Activated CD8-positive, alpha-beta memory T cell treated with anti-CD3 and anti-CD28 coated beads, Interleukin-2, amount 10 ng/mL, durations not matched to agents 7 days and 5 days (primary cell): ENCODE measurements at regions of chr6 and their contacts with region 1.

Region 1: GRCh38 chr6:13434777-13435176 is 52.6 kb downstream of the GFOD1 start:
- DNase-seq: no peak
- ATAC-seq: no peak
- H3K4me3 Mint-ChIP-seq: no peak overlapping the region
- H3K27ac Mint-ChIP-seq: peak overlapping the region; percentile 97
- H3K4me1 Mint-ChIP-seq: peaks cover 76% of the 10 kb centered on the region
- H3K27me3 Mint-ChIP-seq: no peaks in the 10 kb centered on the region

Region 2: GRCh38 chr6:13445005-13445743 is 10.4 kb after region 1 on chr6:
- CTCF ChIA-PET with region 1: interaction called, 10 read pairs
- DNase-seq: no peak
- ATAC-seq: no peak
- H3K4me3 Mint-ChIP-seq: no peak overlapping the region
- H3K27ac Mint-ChIP-seq: no peak overlapping the region
- H3K4me1 Mint-ChIP-seq: peaks cover 23% of the 10 kb centered on the region
- H3K27me3 Mint-ChIP-seq: no peaks in the 10 kb centered on the region